HepG2 (cell line): ENCODE measurements at regions of chr10 and their contacts with region 1.

Region 1: DNA sequence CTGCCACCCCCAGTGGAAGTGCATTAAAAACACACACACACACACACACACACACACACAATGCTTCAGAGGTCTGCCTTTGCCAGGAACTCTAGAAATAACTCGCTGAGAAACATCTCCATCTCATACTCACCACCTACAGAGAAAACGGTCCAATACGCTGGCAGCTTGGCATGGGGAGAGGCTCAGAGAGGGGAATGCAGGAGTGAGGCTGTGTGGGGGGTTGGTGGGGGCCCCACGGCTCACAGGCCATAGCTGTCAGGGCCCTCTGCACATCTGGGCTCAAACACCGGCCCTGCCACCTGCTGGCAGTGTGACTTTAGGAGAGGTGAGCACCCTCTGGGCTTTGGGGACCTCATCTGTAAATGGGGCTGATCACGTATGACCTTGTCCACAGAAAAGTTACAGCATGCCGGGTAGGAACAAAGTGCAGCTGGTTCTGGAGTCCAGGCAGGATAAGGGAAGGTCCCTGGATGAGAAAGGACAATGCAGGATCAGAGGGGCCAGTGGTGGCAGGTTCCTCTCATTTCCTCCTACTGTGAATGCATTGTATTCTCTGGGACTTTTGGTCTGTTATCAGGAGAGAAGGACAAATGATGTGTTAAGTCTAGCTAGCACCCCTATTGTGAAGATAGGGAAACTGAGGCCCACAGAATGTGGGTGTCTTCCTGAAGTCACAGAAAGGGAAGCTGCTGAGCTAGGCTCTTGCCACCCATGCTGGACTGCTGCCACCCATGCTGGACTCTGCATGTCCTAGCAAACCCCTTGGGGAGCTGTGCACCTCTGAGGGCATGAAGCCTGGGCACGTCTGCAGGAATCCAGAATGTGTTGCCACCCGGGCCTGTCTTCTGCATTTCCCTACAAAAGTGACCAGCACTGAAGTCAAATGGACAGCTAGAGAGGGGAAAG is 404.6 kb downstream of the RPS24 start:
- DNase-seq: peak; percentile 70
- ATAC-seq: peak; percentile 84
- H3K4me3 ChIP-seq: no peak overlapping the region
- H3K27ac ChIP-seq: peak overlapping the region; percentile 60
- H3K4me1 ChIP-seq: peaks cover 66% of the 10 kb centered on the region
- H3K27me3 ChIP-seq: no peaks in the 10 kb centered on the region
- CTCF ChIP-seq: peak; percentile 86
- EP300 ChIP-seq: peak; percentile 25 to 68; a peak in 2 of 4 replicates
- POLR2A ChIP-seq: no peak
- RAD21 ChIP-seq: peak; percentile 54

Region 2: GRCh38 chr10:78407009-78407711 is 31.1 kb before region 1 on chr10:
- CTCF ChIA-PET with region 1: no interaction called
- POLR2A ChIA-PET with region 1: no interaction called
- in situ Hi-C with region 1: no loop called
- intact Hi-C with region 1: no loop called
- DNase-seq: peak; percentile 20
- ATAC-seq: peak; percentile 77
- H3K4me3 ChIP-seq: peak overlapping the region in 1 of 3 experiments; percentile 38; a peak in 1 of 6 replicates
- H3K27ac ChIP-seq: no peak overlapping the region
- H3K4me1 ChIP-seq: no peaks in the 10 kb centered on the region; the same call in 1 of the 2 replicates
- H3K27me3 ChIP-seq: peaks cover 4 to 63% of the 10 kb centered on the region in 2 experiments; a peak in 4 of 5 replicates
- CTCF ChIP-seq: no peak
- EP300 ChIP-seq: no peak
- POLR2A ChIP-seq: no peak
- RAD21 ChIP-seq: no peak

Region 3: GRCh38 chr10:78450807-78451485 is 12.7 kb after region 1 on chr10:
- CTCF ChIA-PET with region 1: no interaction called
- POLR2A ChIA-PET with region 1: interaction called, 11 read pairs
- in situ Hi-C with region 1: no loop called
- intact Hi-C with region 1: no loop called
- DNase-seq: no peak
- ATAC-seq: no peak
- H3K4me3 ChIP-seq: no peak overlapping the region
- H3K27ac ChIP-seq: no peak overlapping the region
- H3K4me1 ChIP-seq: peaks cover 28% of the 10 kb centered on the region
- H3K27me3 ChIP-seq: no peaks in the 10 kb centered on the region
- CTCF ChIP-seq: no peak
- EP300 ChIP-seq: no peak
- POLR2A ChIP-seq: no peak
- RAD21 ChIP-seq: no peak

Region 4: DNA sequence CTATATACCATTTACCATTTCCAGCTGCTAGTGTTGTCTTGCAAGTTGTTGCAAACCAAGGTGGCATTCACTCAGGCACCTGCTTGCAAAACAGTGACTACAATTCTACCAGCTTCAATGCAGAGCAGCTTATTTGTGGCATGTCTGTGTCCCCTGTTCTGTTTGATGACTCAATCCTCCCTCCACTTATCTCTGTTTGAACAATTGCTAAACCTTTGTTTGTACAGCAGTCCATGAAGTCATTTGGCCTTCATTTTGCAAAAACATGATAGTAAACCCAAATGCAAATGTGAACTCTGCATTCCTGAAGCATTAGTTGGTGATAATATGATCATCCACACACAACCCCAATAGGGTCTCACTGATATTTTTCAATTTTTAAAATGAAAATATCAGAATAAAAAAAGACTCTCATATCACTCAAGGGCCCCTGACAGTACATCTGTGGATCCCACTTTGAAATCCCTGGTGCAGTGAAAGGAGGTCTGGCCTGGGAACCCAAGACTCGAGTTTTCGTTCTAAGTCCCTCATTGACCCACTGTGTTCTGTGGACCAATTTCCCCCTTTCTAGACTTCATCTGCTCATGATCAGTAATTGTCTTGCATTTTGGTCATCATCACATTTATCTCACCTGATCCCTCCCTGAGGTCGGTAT is 20.9 kb after region 1 on chr10:
- CTCF ChIA-PET with region 1: no interaction called
- POLR2A ChIA-PET with region 1: interaction called, 34 read pairs
- in situ Hi-C with region 1: no loop called
- intact Hi-C with region 1: loop called (anchors 1 kb)
- DNase-seq: peak; percentile 99
- ATAC-seq: peak; percentile 97
- H3K4me3 ChIP-seq: peak overlapping the region in 1 of 3 experiments; percentile 37; a peak in 1 of 6 replicates
- H3K27ac ChIP-seq: peak overlapping the region; percentile 97
- H3K4me1 ChIP-seq: peaks cover 72% of the 10 kb centered on the region
- H3K27me3 ChIP-seq: no peaks in the 10 kb centered on the region
- CTCF ChIP-seq: peak; percentile 16; the same call in 1 of the 2 replicates
- EP300 ChIP-seq: peak; percentile 99 to 100
- POLR2A ChIP-seq: peak; percentile 39 to 63; a peak in 2 of 4 replicates
- RAD21 ChIP-seq: no peak

Region 5: DNA sequence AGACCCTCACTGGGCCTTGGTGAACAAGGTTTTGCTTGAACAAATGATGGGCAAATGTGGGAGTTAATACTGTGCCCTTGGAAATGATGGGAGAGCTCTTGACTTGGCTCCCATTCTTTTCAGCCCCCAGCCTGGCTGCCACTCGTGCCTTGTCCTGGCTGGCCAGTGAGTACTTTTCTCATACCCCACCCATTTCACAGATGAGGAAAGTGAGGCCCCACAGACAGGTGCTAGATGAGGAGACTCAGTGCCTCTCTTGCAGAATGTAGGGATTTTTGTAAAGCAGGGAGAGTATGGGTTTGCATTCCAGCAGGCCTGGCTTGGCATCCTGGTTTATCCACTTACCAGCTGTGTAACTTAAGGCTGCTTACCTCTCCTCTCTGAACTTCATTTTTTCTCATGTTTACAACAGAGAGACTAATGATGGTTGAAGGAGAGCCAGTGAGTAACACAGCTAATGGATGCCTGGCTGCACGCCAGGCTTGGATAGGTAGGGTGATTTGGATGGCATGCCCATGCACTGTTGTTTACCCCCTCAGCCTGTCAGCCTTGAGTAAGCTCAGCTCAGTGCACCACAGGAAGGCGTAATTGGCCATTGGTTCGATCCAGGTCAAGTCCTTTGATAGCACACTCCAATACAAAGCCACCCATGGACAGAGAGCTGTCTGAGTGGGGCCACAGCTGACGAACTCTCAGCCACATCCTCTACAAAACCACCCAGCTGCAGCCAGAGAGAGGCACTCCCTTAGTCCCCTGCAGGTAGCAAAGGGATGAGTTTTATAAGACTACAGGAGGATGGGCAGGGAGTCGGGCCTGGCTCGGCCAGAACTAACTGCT is 32.2 kb after region 1 on chr10:
- CTCF ChIA-PET with region 1: no interaction called
- POLR2A ChIA-PET with region 1: interaction called, 14 read pairs
- in situ Hi-C with region 1: no loop called
- intact Hi-C with region 1: loop called (anchors 1 kb)
- DNase-seq: peak; percentile 28
- ATAC-seq: no peak; the same call in 2 of the 3 replicates
- H3K4me3 ChIP-seq: no peak overlapping the region
- H3K27ac ChIP-seq: peak overlapping the region; percentile 49
- H3K4me1 ChIP-seq: peaks cover 67% of the 10 kb centered on the region
- H3K27me3 ChIP-seq: no peaks in the 10 kb centered on the region
- CTCF ChIP-seq: no peak
- EP300 ChIP-seq: no peak
- POLR2A ChIP-seq: no peak
- RAD21 ChIP-seq: no peak

Region 6: DNA sequence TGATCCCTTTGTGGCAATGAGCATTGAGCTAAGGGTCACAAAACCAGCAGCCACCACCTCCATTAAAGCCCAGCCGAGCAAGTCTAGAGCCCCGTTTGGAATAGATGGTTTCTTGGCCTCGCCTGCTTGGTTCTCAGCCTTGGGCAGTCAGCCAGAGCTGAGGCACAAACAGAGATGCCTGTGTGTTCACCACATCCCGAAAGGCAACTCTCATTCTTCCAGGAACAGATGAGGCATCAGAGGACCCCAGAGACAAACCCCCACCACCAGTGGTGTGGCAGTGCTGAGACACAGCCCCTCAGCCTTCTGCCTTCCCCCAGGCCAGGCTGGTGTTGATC is 427.3 kb after region 1 on chr10:
- CTCF ChIA-PET with region 1: no interaction called
- POLR2A ChIA-PET with region 1: no interaction called
- in situ Hi-C with region 1: no loop called
- intact Hi-C with region 1: no loop called
- DNase-seq: no peak
- ATAC-seq: no peak
- H3K4me3 ChIP-seq: no peak overlapping the region
- H3K27ac ChIP-seq: no peak overlapping the region
- H3K4me1 ChIP-seq: peaks cover 13% of the 10 kb centered on the region
- H3K27me3 ChIP-seq: peaks cover 6 to 36% of the 10 kb centered on the region in 2 experiments
- CTCF ChIP-seq: no peak
- EP300 ChIP-seq: no peak
- POLR2A ChIP-seq: no peak
- RAD21 ChIP-seq: no peak